Activated naive CD4-positive, alpha-beta T cell treated with anti-CD3 and anti-CD28 coated beads for 36 hours (primary cell): ENCODE measurements at regions of chr21 and their contacts with region 1.

Region 1: GRCh38 chr21:34888569-34889319 is 160.4 kb downstream of the RUNX1 start:
- DNase-seq: peak; percentile 90
- H3K4me3 Mint-ChIP-seq: peak overlapping the region; percentile 91
- H3K27ac Mint-ChIP-seq: peak overlapping the region; percentile 99
- H3K4me1 Mint-ChIP-seq: peaks cover 30% of the 10 kb centered on the region
- H3K27me3 Mint-ChIP-seq: no peaks in the 10 kb centered on the region

Region 2: GRCh38 chr21:34579411-34579810 is 309.3 kb before region 1 on chr21:
- CTCF ChIA-PET with region 1: no interaction called
- intact Hi-C with region 1: no loop called
- DNase-seq: no peak
- H3K4me3 Mint-ChIP-seq: no peak overlapping the region
- H3K27ac Mint-ChIP-seq: no peak overlapping the region
- H3K4me1 Mint-ChIP-seq: peaks cover 5% of the 10 kb centered on the region
- H3K27me3 Mint-ChIP-seq: no peaks in the 10 kb centered on the region

Region 3: DNA sequence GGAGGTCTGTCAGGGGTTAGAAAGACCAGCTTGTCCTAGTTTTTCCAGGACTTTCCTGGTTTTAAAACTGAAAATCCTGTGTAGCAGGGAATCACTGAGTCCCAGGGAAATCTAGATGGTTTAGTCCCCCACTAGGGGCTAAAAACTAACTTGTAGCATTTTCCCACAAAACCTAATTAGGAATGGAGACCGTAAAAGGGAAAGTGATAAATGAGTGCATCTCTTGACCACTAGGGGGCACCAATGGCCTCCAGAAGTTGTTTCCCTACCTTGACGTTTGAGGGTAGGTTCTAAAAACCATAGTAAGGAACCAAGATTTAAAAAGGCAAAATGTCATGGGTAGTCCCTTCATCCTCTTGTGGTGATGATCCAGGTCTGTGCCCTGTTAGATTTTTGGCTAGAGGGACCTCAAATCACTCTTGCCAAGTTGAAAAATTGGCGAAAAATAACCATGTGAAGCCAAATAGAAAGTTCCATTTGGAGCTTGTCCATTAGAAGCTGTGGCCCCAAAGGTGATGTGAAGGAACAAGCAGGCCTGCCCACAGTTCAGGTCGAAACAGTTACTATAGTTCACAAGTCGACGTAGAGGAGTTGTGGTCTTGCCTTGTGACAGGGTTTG is 195.4 kb before region 1 on chr21:
- CTCF ChIA-PET with region 1: no interaction called
- intact Hi-C with region 1: loop called (anchors 2 kb)
- DNase-seq: peak; percentile 69
- H3K4me3 Mint-ChIP-seq: no peak overlapping the region
- H3K27ac Mint-ChIP-seq: no peak overlapping the region
- H3K4me1 Mint-ChIP-seq: no peaks in the 10 kb centered on the region
- H3K27me3 Mint-ChIP-seq: peaks cover 13% of the 10 kb centered on the region

Region 4: GRCh38 chr21:34807146-34807880 is 81.4 kb before region 1 on chr21:
- CTCF ChIA-PET with region 1: interaction called, 6 read pairs
- intact Hi-C with region 1: loop called (anchors 1 kb)
- DNase-seq: peak; percentile 92
- H3K4me3 Mint-ChIP-seq: no peak overlapping the region
- H3K27ac Mint-ChIP-seq: peak overlapping the region; percentile 91
- H3K4me1 Mint-ChIP-seq: peaks cover 91% of the 10 kb centered on the region
- H3K27me3 Mint-ChIP-seq: no peaks in the 10 kb centered on the region

Region 5: DNA sequence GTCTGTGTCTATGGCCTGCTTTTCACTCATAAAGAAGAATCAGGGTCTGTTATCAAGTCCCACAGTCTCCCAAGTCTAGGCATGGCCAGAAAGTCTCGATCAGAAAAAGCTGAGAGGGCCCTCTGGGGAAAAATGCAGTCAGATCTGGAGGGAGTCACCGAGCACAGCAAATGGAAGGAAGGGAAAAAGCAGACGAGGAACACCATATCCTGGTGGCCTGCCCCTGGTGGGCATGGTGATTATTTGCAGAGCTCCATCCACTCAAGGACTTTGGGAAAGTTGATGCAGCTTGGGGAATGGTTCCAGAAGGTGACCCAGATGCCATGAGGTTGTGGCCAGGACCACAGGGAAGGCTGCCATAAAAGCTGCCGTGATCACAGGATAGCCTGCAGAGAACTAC is 30.9 kb before region 1 on chr21:
- CTCF ChIA-PET with region 1: no interaction called
- intact Hi-C with region 1: no loop called
- DNase-seq: no peak
- H3K4me3 Mint-ChIP-seq: no peak overlapping the region
- H3K27ac Mint-ChIP-seq: no peak overlapping the region
- H3K4me1 Mint-ChIP-seq: peaks cover 41% of the 10 kb centered on the region
- H3K27me3 Mint-ChIP-seq: no peaks in the 10 kb centered on the region

Region 6: DNA sequence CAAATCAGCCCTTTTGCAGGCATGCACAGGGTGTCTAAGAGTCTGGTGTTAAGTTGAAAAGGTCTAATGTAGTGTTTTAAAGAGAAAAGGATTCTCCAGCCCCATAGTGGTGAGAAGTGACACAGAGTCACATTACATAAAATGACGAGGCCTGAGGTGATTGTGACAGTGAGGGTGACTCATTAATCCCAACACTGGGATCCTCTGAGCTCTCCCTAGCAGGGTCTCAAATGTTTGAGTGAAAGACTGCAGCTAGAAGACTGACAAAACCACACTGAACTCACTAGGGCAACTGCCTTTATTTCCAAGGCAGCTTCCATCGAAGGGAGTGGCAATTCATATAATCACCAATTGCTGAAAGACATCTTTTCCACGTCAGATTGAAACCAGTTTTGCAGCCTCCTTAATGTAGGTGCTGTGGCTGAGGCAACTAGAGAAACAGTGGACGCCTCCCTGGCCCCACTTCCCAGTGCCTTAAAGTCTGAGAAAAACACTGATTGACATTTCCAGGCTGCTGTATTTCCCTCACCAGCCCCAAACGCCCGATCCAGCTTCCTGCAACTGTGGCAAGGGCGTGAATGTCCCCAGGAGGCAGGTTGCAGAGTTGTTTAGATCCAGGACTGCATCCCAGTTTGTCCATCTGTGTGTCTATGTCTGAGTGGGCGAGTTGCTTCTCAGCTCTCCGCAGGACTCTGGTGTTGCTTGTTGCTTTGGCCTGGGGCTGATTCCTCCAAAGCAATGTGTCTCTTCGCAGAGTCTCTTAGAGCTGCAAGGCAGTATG is 79.0 kb after region 1 on chr21:
- CTCF ChIA-PET with region 1: interaction called, 8 read pairs
- intact Hi-C with region 1: loop called (anchors 1 kb)
- DNase-seq: peak; percentile 73
- H3K4me3 Mint-ChIP-seq: peak overlapping the region; percentile 47
- H3K27ac Mint-ChIP-seq: peak overlapping the region; percentile 93
- H3K4me1 Mint-ChIP-seq: peaks cover 84% of the 10 kb centered on the region
- H3K27me3 Mint-ChIP-seq: no peaks in the 10 kb centered on the region

Region 7: DNA sequence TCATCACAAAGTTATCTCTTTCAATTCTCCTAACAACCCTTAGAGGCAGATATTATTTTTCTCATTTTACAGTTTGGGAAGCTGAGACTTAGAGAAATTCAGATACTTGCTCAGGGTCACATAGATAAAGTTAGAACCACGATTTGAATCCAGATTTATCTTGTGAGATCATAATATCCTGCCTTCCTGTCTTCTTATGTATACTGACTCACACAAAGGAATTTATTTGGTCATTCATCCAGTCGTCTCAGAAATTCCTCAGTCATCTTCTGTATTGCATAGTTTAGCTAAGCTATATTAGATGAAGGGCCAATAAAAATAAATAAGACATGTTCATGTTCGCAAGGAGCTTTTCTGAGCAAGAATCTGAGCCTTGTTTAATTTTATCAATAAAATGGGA is 196.1 kb after region 1 on chr21:
- CTCF ChIA-PET with region 1: interaction called, 4 read pairs
- intact Hi-C with region 1: loop called (anchors 1 kb)
- DNase-seq: no peak
- H3K4me3 Mint-ChIP-seq: no peak overlapping the region
- H3K27ac Mint-ChIP-seq: no peak overlapping the region
- H3K4me1 Mint-ChIP-seq: peaks cover 32% of the 10 kb centered on the region
- H3K27me3 Mint-ChIP-seq: peaks cover 3% of the 10 kb centered on the region

Region 8: DNA sequence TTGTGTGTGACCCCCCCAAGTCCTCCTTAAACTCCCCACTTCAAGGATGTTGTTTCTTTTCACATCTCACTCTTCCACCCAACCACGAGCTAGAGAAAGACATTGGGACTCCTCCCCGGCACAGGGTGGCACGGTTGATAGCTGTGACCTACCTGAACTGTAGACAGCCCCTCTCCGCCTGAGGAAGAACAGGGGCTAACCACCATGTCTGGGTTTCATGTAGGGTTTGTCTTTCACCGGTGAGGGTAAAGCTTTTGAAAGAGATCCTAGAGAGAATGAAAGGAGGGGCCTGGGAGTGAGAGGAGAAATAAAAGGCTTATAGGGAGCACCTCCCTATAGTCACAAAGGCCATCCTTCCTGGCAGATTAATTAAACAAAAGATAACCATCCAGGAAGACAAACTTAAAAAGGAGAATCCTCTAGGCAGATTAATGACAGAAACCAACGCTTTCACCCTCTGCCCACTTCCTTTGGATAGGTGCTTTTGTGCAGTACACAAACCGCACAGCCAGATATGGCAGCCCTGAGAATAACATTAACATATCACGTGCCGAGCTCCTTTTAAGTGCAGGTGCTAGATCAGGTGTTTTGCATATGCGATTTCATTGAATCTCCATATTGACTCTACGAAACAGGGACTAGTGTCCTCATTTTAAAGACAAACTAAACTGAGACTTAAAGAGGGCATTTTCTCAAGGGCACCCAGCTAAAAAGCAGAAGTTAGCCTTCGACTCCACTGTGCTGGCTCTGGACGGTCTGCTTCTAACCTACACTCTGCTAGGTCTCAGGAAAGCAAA is 338.4 kb after region 1 on chr21:
- CTCF ChIA-PET with region 1: no interaction called
- intact Hi-C with region 1: loop called (anchors 2 kb)
- DNase-seq: peak; percentile 87
- H3K4me3 Mint-ChIP-seq: peak overlapping the region; percentile 66
- H3K27ac Mint-ChIP-seq: peak overlapping the region; percentile 87
- H3K4me1 Mint-ChIP-seq: peaks cover 39% of the 10 kb centered on the region
- H3K27me3 Mint-ChIP-seq: no peaks in the 10 kb centered on the region

Region 9: GRCh38 chr21:35616090-35616489 is 727.3 kb after region 1 on chr21:
- CTCF ChIA-PET with region 1: no interaction called
- intact Hi-C with region 1: loop called (anchors 5 kb)
- DNase-seq: no peak
- H3K4me3 Mint-ChIP-seq: no peak overlapping the region
- H3K27ac Mint-ChIP-seq: no peak overlapping the region
- H3K4me1 Mint-ChIP-seq: peaks cover 2% of the 10 kb centered on the region
- H3K27me3 Mint-ChIP-seq: no peaks in the 10 kb centered on the region